HCT116 (cell line): ENCODE measurements at regions of chr11 and their contacts with region 1.

Region 1: DNA sequence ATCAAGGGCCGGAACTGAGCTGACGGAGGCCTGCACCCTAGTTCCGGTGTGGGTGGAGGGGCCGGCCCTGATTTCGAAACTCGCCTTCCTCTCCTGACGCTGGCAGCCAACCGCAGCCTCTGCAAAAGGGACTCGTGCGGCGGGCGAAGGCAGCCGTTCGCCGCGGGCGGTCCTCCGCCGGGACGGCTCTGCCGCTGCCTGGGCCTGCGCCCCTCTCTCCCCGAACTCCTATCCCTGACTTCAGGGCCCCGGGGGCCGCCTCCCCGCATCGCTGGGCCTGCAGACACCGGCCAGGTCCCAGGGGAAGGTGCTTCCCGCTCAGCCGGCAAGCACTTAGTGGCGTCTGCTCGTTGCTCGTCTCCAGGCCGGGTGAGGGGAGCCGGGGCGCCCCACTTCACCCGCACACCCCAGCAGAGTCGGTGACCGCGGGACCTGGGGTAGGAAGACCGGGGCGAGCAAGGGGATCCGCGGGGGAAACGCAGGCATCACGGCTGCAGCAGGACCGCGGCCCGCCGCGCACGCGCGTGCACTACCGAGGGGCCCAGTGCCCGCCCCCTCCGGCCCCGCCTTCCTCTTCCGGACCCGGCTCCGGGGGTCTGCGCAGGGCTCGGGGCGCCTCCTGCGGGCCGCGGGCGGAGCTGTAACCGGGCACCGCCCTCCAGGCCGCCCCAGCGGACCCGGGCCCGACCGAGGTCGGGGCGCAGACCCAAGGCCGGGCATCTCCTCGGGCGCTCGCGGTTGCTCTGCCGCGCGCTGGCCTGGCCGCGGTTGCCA is 464 bp upstream of the ANKRD13D start:
- DNase-seq: peak; percentile 54
- ATAC-seq: peak; percentile 78
- H3K4me3 ChIP-seq: peak overlapping the region; percentile 74 to 91
- H3K27ac ChIP-seq: peak overlapping the region; percentile 100
- H3K4me1 ChIP-seq: peaks cover 13 to 29% of the 10 kb centered on the region in 2 experiments
- H3K27me3 ChIP-seq: no peaks in the 10 kb centered on the region
- CTCF ChIP-seq: no peak
- POLR2A ChIP-seq: peak; percentile 59
- RAD21 ChIP-seq: no peak

Region 2: GRCh38 chr11:67111261-67111660 is 177.4 kb before region 1 on chr11:
- CTCF ChIA-PET with region 1: no interaction called
- POLR2A ChIA-PET with region 1: no interaction called
- RAD21 ChIA-PET with region 1: no interaction called
- intact Hi-C with region 1: no loop called
- DNase-seq: no peak
- ATAC-seq: no peak
- H3K4me3 ChIP-seq: no peak overlapping the region
- H3K27ac ChIP-seq: no peak overlapping the region
- H3K4me1 ChIP-seq: 0 out of 4 replicates have a peak, but pooled peaks cover 0 to 3% of the 10 kb centered on the region in 2 experiments
- H3K27me3 ChIP-seq: no peaks in the 10 kb centered on the region
- CTCF ChIP-seq: no peak
- POLR2A ChIP-seq: no peak
- RAD21 ChIP-seq: no peak

Region 3: GRCh38 chr11:67303132-67303834 is 14.6 kb after region 1 on chr11 and contains the start of gene SSH3:
- CTCF ChIA-PET with region 1: interaction called, 5 read pairs
- POLR2A ChIA-PET with region 1: interaction called, 11 read pairs
- RAD21 ChIA-PET with region 1: no interaction called
- intact Hi-C with region 1: no loop called
- DNase-seq: peak; percentile 42
- ATAC-seq: peak; percentile 94
- H3K4me3 ChIP-seq: peak within 1 kb of the TSS; percentile 79 to 91
- H3K27ac ChIP-seq: peak within 1 kb of the TSS; percentile 85
- H3K4me1 ChIP-seq: peaks cover 21 to 25% of the 10 kb centered on the region in 2 experiments
- H3K27me3 ChIP-seq: no peaks in the 10 kb centered on the region
- CTCF ChIP-seq: no peak
- POLR2A ChIP-seq: no peak
- RAD21 ChIP-seq: no peak
- total RNA-seq, gene SSH3: 57.8 TPM